ENCODE measurements at regions of chrX and their contacts with region 1.

Region 1: DNA sequence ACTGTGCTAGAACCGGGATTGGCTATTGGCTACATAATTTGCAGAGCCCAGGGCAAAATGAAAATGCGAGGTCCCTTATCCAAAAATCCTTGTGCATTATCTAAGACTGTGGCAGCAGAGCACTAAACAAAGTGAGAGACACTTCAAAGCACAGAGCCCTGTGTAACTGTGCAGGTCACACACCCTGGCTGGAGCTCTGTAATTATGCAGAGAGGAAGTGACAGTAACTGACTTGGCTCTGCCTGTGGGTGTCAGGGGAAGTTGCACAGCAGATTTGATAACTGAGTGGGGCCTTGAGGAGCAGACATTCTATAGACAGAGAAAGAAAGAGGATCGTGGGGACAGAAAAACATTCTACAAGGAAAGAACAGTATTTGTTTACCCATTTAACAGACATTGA is 173.5 kb upstream of the FMR1 start:
- DNase-seq: peak in 1 of 9 donors; percentile 20
- ATAC-seq: peak; percentile 54
- H3K4me3 ChIP-seq: no peak overlapping the region
- H3K4me3 Mint-ChIP-seq: peak overlapping the region in 2 of 10 donors; percentile 8 to 68
- H3K27ac ChIP-seq: no peak overlapping the region
- H3K27ac Mint-ChIP-seq: peak overlapping the region in 1 of 9 donors; percentile 89
- H3K4me1 ChIP-seq: no peaks in the 10 kb centered on the region
- H3K4me1 Mint-ChIP-seq: peaks cover 2 to 37% (median 10%) of the 10 kb centered on the region in 7 donors
- H3K27me3 ChIP-seq: no peaks in the 10 kb centered on the region
- H3K27me3 Mint-ChIP-seq: no peaks in the 10 kb centered on the region

Region 2: GRCh38 chrX:147749308-147749707 is 11.0 kb after region 1 on chrX:
- CTCF ChIA-PET with region 1: no interaction called
- POLR2A ChIA-PET with region 1: no interaction called
- intact Hi-C with region 1: loop called in 1 of 2 experiments (anchors 2 kb)
- DNase-seq: no peak
- ATAC-seq: no peak
- H3K4me3 ChIP-seq: no peak overlapping the region
- H3K4me3 Mint-ChIP-seq: no peak overlapping the region
- H3K27ac ChIP-seq: no peak overlapping the region
- H3K27ac Mint-ChIP-seq: no peak overlapping the region
- H3K4me1 ChIP-seq: no peaks in the 10 kb centered on the region
- H3K4me1 Mint-ChIP-seq: no peaks in the 10 kb centered on the region
- H3K27me3 ChIP-seq: no peaks in the 10 kb centered on the region
- H3K27me3 Mint-ChIP-seq: peaks cover 0 to 9% (median 6%) of the 10 kb centered on the region in 5 donors

Region 3: GRCh38 chrX:147763131-147763530 is 24.9 kb after region 1 on chrX:
- CTCF ChIA-PET with region 1: no interaction called
- POLR2A ChIA-PET with region 1: no interaction called
- intact Hi-C with region 1: loop called in 1 of 2 experiments (anchors 1 kb)
- DNase-seq: peak in 1 of 9 donors; percentile 5
- ATAC-seq: no peak
- H3K4me3 ChIP-seq: no peak overlapping the region
- H3K4me3 Mint-ChIP-seq: peak overlapping the region in 3 of 10 donors; percentile 16 to 64 (median 19)
- H3K27ac ChIP-seq: no peak overlapping the region
- H3K27ac Mint-ChIP-seq: peak overlapping the region in 1 of 9 donors; percentile 73
- H3K4me1 ChIP-seq: no peaks in the 10 kb centered on the region
- H3K4me1 Mint-ChIP-seq: peaks cover 0 to 21% (median 8%) of the 10 kb centered on the region in 7 donors
- H3K27me3 ChIP-seq: no peaks in the 10 kb centered on the region
- H3K27me3 Mint-ChIP-seq: peaks cover 0 to 3% (median 0%) of the 10 kb centered on the region in 5 donors

Region 4: GRCh38 chrX:147781844-147782243 is 43.6 kb after region 1 on chrX:
- CTCF ChIA-PET with region 1: no interaction called
- POLR2A ChIA-PET with region 1: no interaction called
- intact Hi-C with region 1: loop called in 1 of 2 experiments (anchors 5 kb)
- DNase-seq: no peak
- ATAC-seq: no peak
- H3K4me3 ChIP-seq: no peak overlapping the region
- H3K4me3 Mint-ChIP-seq: no peak overlapping the region
- H3K27ac ChIP-seq: no peak overlapping the region
- H3K27ac Mint-ChIP-seq: no peak overlapping the region
- H3K4me1 ChIP-seq: no peaks in the 10 kb centered on the region
- H3K4me1 Mint-ChIP-seq: peaks cover 0 to 17% (median 0%) of the 10 kb centered on the region in 7 donors
- H3K27me3 ChIP-seq: no peaks in the 10 kb centered on the region
- H3K27me3 Mint-ChIP-seq: peaks cover 0 to 4% (median 0%) of the 10 kb centered on the region in 5 donors

Region 5: DNA sequence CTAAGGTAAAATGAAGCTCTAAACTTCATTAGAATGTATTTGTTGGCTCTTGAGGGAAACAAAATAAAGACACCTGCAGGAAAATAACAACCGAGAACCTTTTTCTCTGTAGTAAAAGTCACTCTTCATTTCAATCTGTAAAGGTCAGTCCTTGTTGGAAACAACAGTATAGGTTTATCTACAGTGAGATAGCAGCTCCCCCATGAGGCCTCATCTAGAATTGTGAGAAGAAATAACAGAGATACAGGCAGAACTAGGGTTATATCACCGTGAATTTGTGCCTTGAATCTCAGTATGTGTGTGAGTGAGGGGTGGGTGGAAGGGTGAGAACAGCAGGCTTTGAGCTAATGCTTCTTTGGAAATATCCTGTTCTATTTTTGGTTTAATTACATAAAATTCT is 65.7 kb after region 1 on chrX:
- CTCF ChIA-PET with region 1: no interaction called
- POLR2A ChIA-PET with region 1: no interaction called
- intact Hi-C with region 1: loop called in 1 of 2 experiments (anchors 5 kb)
- DNase-seq: peak in 1 of 9 donors; percentile 3
- ATAC-seq: no peak
- H3K4me3 ChIP-seq: no peak overlapping the region
- H3K4me3 Mint-ChIP-seq: no peak overlapping the region
- H3K27ac ChIP-seq: no peak overlapping the region
- H3K27ac Mint-ChIP-seq: no peak overlapping the region
- H3K4me1 ChIP-seq: no peaks in the 10 kb centered on the region
- H3K4me1 Mint-ChIP-seq: peaks cover 0 to 6% (median 0%) of the 10 kb centered on the region in 7 donors
- H3K27me3 ChIP-seq: no peaks in the 10 kb centered on the region
- H3K27me3 Mint-ChIP-seq: peaks cover 0 to 4% (median 0%) of the 10 kb centered on the region in 5 donors

Region 6: DNA sequence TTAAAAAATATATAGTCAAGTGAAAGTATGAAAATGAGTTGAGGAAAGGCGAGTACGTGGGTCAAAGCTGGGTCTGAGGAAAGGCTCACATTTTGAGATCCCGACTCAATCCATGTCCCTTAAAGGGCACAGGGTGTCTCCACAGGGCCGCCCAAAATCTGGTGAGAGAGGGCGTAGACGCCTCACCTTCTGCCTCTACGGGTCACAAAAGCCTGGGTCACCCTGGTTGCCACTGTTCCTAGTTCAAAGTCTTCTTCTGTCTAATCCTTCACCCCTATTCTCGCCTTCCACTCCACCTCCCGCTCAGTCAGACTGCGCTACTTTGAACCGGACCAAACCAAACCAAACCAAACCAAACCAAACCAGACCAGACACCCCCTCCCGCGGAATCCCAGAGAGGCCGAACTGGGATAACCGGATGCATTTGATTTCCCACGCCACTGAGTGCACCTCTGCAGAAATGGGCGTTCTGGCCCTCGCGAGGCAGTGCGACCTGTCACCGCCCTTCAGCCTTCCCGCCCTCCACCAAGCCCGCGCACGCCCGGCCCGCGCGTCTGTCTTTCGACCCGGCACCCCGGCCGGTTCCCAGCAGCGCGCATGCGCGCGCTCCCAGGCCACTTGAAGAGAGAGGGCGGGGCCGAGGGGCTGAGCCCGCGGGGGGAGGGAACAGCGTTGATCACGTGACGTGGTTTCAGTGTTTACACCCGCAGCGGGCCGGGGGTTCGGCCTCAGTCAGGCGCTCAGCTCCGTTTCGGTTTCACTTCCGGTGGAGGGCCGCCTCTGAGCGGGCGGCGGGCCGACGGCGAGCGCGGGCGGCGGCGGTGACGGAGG is 173.1 kb after region 1 on chrX and contains the start of gene FMR1:
- CTCF ChIA-PET with region 1: no interaction called
- POLR2A ChIA-PET with region 1: no interaction called
- intact Hi-C with region 1: loop called in 1 of 2 experiments (anchors 5 kb)
- DNase-seq: peak; percentile 83 to 95 (median 93)
- ATAC-seq: peak; percentile 96
- H3K4me3 ChIP-seq: peak within 1 kb of the TSS; percentile 71
- H3K4me3 Mint-ChIP-seq: peak within 1 kb of the TSS; percentile 87 to 98 (median 96)
- H3K27ac ChIP-seq: peak within 1 kb of the TSS; percentile 93
- H3K27ac Mint-ChIP-seq: peak within 1 kb of the TSS; percentile 87 to 97 (median 94)
- H3K4me1 ChIP-seq: peaks cover 0 to 35% of the 10 kb centered on the region in 2 donors
- H3K4me1 Mint-ChIP-seq: peaks cover 7 to 43% (median 34%) of the 10 kb centered on the region in 7 donors
- H3K27me3 ChIP-seq: no peaks in the 10 kb centered on the region
- H3K27me3 Mint-ChIP-seq: peaks cover 0 to 2% (median 0%) of the 10 kb centered on the region in 5 donors
- total RNA-seq, gene FMR1: 50.6 to 84.2 (median 76.8) TPM